Activated CD8-positive, alpha-beta T cell treated with anti-CD3 and anti-CD28 coated beads for 36 hours (primary cell): ENCODE measurements at regions of chr17 and their contacts with region 1.

Region 1: DNA sequence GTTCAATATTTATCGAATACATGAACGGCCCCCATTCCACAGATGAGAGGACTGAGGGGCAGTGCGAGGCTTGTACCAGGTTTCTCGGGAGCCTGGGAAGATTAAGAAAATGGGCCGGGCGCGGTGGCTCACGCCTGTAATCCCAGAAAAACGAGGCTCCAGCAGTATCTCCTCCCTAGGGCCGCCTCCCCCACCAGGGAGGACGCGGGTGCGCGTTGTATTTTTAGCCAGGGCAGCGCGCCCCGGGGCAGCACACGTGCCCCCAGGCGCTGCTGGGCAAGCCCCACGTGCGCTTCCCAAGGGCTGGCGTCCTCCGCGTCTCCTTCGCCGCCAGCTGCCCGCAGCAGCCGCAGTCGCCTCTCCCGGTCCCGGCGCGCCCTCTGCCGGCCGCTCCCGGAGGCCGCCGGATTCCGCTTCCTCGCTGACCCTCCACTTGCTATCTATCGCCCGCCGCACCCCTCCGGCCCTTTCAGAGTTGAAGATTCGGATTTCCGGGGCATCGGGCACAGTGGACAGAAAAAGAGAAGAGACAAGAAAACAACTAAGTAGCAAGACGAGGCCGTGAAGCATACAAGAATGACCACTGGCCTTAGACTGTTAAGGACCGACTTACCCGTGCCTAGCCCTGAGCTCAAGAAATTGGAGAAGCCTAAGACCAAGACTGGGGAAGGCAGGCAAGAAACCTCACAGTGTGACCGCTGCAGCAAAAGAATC is 1.9 kb upstream of the YBX2 start:
- DNase-seq: peak; percentile 70
- ATAC-seq: peak; percentile 35
- H3K4me3 Mint-ChIP-seq: no peak overlapping the region
- H3K27ac Mint-ChIP-seq: no peak overlapping the region
- H3K4me1 Mint-ChIP-seq: peaks cover 14% of the 10 kb centered on the region
- H3K27me3 Mint-ChIP-seq: peaks cover 23% of the 10 kb centered on the region
- CTCF ChIP-seq: peak; percentile 99

Region 2: GRCh38 chr17:7147772-7148171 is 148.6 kb before region 1 on chr17:
- CTCF ChIA-PET with region 1: no interaction called
- POLR2A ChIA-PET with region 1: no interaction called
- intact Hi-C with region 1: no loop called
- DNase-seq: no peak
- ATAC-seq: peak; percentile 64
- H3K4me3 Mint-ChIP-seq: no peak overlapping the region
- H3K27ac Mint-ChIP-seq: no peak overlapping the region
- H3K4me1 Mint-ChIP-seq: no peaks in the 10 kb centered on the region
- H3K27me3 Mint-ChIP-seq: no peaks in the 10 kb centered on the region
- CTCF ChIP-seq: no peak

Region 3: GRCh38 chr17:7219812-7220581 is 76.3 kb before region 1 on chr17 and contains the starts of genes ACADVL and DLG4:
- CTCF ChIA-PET with region 1: interaction called, 34 read pairs
- POLR2A ChIA-PET with region 1: interaction called, 3 read pairs
- intact Hi-C with region 1: no loop called
- DNase-seq: peak; percentile 96
- ATAC-seq: peak; percentile 74
- H3K4me3 Mint-ChIP-seq: peak within 1 kb of the TSS; percentile 94
- H3K27ac Mint-ChIP-seq: peak within 1 kb of the TSS; percentile 94
- H3K4me1 Mint-ChIP-seq: peaks cover 55% of the 10 kb centered on the region
- H3K27me3 Mint-ChIP-seq: no peaks in the 10 kb centered on the region
- CTCF ChIP-seq: no peak
- total RNA-seq, gene ACADVL: 288 to 291 TPM
- total RNA-seq, gene DLG4: 9.5 to 9.7 TPM

Region 4: GRCh38 chr17:7266784-7267183 is 29.6 kb before region 1 on chr17:
- CTCF ChIA-PET with region 1: interaction called, 21 read pairs
- POLR2A ChIA-PET with region 1: no interaction called
- intact Hi-C with region 1: no loop called
- DNase-seq: no peak
- ATAC-seq: no peak
- H3K4me3 Mint-ChIP-seq: no peak overlapping the region
- H3K27ac Mint-ChIP-seq: no peak overlapping the region
- H3K4me1 Mint-ChIP-seq: peaks cover 17% of the 10 kb centered on the region
- H3K27me3 Mint-ChIP-seq: peaks cover 17% of the 10 kb centered on the region
- CTCF ChIP-seq: no peak

Region 5: GRCh38 chr17:7280519-7281429 is 15.6 kb before region 1 on chr17:
- CTCF ChIA-PET with region 1: interaction called, 144 read pairs
- POLR2A ChIA-PET with region 1: interaction called, 11 read pairs
- intact Hi-C with region 1: loop called (anchors 2 kb)
- DNase-seq: peak; percentile 92
- ATAC-seq: peak; percentile 85
- H3K4me3 Mint-ChIP-seq: peak overlapping the region; percentile 73
- H3K27ac Mint-ChIP-seq: peak overlapping the region; percentile 57
- H3K4me1 Mint-ChIP-seq: peaks cover 19% of the 10 kb centered on the region
- H3K27me3 Mint-ChIP-seq: peaks cover 16% of the 10 kb centered on the region
- CTCF ChIP-seq: peak; percentile 79

Region 6: DNA sequence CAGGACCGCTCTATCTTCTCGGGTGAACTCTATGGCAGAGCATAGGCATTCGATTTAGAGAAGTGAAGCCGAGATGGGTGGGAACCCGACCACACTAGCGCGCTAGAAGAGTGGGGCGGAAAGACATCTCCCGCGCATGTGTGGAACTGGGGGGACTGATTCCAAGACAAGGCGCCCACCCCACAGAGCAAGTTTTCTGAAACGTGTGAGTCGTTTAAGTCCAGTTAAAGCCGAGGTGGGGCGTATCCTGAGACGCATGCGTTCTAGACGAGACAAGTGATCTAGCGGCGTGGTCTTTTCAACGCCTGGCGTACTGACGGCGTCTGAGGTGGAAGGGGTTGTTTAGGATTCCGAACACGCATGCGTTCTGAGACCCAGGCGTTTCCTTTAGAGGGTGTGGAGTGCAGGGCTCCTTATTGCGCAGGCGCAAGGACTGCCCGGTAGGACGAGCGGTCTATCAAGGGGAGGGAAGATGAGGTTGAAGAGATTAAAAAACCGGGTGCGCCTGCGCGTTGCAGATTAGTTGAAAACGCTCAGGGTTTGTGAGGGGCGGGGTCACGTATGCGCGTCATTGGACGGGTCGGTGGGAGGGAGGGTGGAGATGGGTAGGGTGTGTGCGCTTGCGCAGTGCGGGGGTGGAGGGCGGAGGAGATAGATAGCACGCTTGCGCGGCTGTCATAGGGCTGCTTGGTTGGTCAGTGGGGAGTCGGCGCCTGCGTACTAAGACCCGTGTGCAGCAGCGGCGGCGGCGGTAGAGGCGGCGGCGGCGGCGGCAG is 10.8 kb after region 1 on chr17 and contains the start of gene EIF5A:
- CTCF ChIA-PET with region 1: interaction called, 27 read pairs
- POLR2A ChIA-PET with region 1: interaction called, 5 read pairs
- intact Hi-C with region 1: no loop called
- DNase-seq: peak; percentile 100
- ATAC-seq: peak; percentile 84
- H3K4me3 Mint-ChIP-seq: peak within 1 kb of the TSS; percentile 94
- H3K27ac Mint-ChIP-seq: peak within 1 kb of the TSS; percentile 98
- H3K4me1 Mint-ChIP-seq: peaks cover 38% of the 10 kb centered on the region
- H3K27me3 Mint-ChIP-seq: no peaks in the 10 kb centered on the region
- CTCF ChIP-seq: no peak
- total RNA-seq, gene EIF5A: 1,064 TPM

Region 7: DNA sequence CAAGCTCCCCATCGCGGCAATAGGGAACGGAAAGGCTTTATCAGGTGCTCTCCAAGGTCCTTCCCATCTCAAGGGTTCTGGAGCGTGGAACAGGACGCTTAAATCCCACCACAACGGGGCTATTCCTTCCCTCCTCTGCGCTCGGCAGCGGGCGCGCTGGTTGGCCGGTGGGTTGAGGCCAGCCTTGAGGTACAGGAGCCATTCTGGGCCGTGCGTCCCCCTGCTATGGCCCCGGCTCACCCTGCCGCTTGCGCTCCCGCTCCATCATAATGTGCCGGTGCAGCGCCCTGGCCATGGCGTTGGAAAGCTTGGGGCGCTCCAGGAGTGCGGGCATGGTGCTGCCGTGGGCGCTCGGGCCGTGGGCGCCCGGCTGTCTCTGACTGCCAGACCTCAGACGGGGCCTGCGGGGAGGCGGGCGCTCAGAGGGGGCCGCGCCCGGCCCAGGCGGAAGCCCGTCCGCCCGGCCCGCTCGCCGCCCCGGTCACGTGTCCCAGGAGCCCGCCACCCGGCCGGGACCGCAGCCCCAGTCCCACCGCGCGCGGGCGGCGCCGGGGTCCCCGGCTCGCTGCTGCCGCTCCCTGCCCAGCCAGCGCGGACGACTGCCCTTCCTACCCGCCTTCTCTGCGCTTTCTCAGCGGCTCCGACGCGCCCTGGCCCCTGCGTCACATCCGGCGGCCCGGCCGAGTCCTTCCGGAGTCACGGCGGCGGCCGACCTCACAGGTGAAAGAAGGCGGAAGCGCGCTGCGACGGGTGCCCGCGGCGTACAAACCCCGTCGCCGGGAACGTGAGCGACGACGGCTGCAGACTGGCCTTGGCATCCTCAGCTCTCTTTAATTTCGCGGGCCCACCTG is 18.6 kb after region 1 on chr17 and contains the start of gene GPS2:
- CTCF ChIA-PET with region 1: interaction called, 11 read pairs
- POLR2A ChIA-PET with region 1: interaction called, 14 read pairs
- intact Hi-C with region 1: no loop called
- DNase-seq: peak; percentile 96
- ATAC-seq: peak; percentile 82
- H3K4me3 Mint-ChIP-seq: peak within 1 kb of the TSS; percentile 88
- H3K27ac Mint-ChIP-seq: peak within 1 kb of the TSS; percentile 89
- H3K4me1 Mint-ChIP-seq: peaks cover 45% of the 10 kb centered on the region
- H3K27me3 Mint-ChIP-seq: no peaks in the 10 kb centered on the region
- CTCF ChIP-seq: no peak
- total RNA-seq, gene GPS2: 31.8 to 36.8 TPM

Region 8: GRCh38 chr17:7336240-7337175 is 40.2 kb after region 1 on chr17 and contains the start of gene ACAP1:
- CTCF ChIA-PET with region 1: interaction called, 12 read pairs
- POLR2A ChIA-PET with region 1: no interaction called
- intact Hi-C with region 1: no loop called
- DNase-seq: peak; percentile 93
- ATAC-seq: peak; percentile 94
- H3K4me3 Mint-ChIP-seq: peak within 1 kb of the TSS; percentile 89
- H3K27ac Mint-ChIP-seq: peak within 1 kb of the TSS; percentile 93
- H3K4me1 Mint-ChIP-seq: peaks cover 47% of the 10 kb centered on the region
- H3K27me3 Mint-ChIP-seq: no peaks in the 10 kb centered on the region
- CTCF ChIP-seq: no peak
- total RNA-seq, gene ACAP1: 309 to 342 TPM

Region 9: GRCh38 chr17:7383742-7384488 is 87.6 kb after region 1 on chr17:
- CTCF ChIA-PET with region 1: no interaction called
- POLR2A ChIA-PET with region 1: no interaction called
- intact Hi-C with region 1: no loop called
- DNase-seq: peak; percentile 82
- ATAC-seq: peak; percentile 96
- H3K4me3 Mint-ChIP-seq: peak overlapping the region; percentile 76
- H3K27ac Mint-ChIP-seq: peak overlapping the region; percentile 85
- H3K4me1 Mint-ChIP-seq: peaks cover 7% of the 10 kb centered on the region
- H3K27me3 Mint-ChIP-seq: peaks cover 32% of the 10 kb centered on the region
- CTCF ChIP-seq: no peak